CD8-positive, alpha-beta T cell (primary cell): ENCODE measurements at regions of chr7 and their contacts with region 1.

Region 1: GRCh38 chr7:26200444-26201246 is at the start of gene HNRNPA2B1:
- DNase-seq: peak; percentile 96 to 100 (median 98)
- ATAC-seq: peak; percentile 75
- H3K4me3 ChIP-seq: peak within 1 kb of the TSS; percentile 75 to 95
- H3K4me3 Mint-ChIP-seq: peak within 1 kb of the TSS; percentile 100
- H3K27ac ChIP-seq: peak within 1 kb of the TSS; percentile 92 to 95
- H3K27ac Mint-ChIP-seq: peak within 1 kb of the TSS; percentile 99
- H3K4me1 ChIP-seq: peaks cover 49% of the 10 kb centered on the region
- H3K4me1 Mint-ChIP-seq: peaks cover 51% of the 10 kb centered on the region
- H3K27me3 ChIP-seq: no peaks in the 10 kb centered on the region
- H3K27me3 Mint-ChIP-seq: no peaks in the 10 kb centered on the region
- CTCF ChIP-seq: no peak
- total RNA-seq, gene HNRNPA2B1: 241 to 247 TPM

Region 2: GRCh38 chr7:25894902-25895791 is 305.5 kb before region 1 on chr7:
- CTCF ChIA-PET with region 1: interaction called, 5 read pairs
- POLR2A ChIA-PET with region 1: interaction called, 6 read pairs
- intact Hi-C with region 1: loop called (anchors 5 to 10 kb)
- DNase-seq: peak; percentile 41 to 80 (median 63)
- ATAC-seq: peak; percentile 41
- H3K4me3 ChIP-seq: peak overlapping the region in 1 of 2 experiments; percentile 12
- H3K4me3 Mint-ChIP-seq: peak overlapping the region; percentile 35
- H3K27ac ChIP-seq: no peak overlapping the region
- H3K27ac Mint-ChIP-seq: no peak overlapping the region
- H3K4me1 ChIP-seq: peaks cover 14% of the 10 kb centered on the region
- H3K4me1 Mint-ChIP-seq: peaks cover 21% of the 10 kb centered on the region
- H3K27me3 ChIP-seq: no peaks in the 10 kb centered on the region
- H3K27me3 Mint-ChIP-seq: peaks cover under 1% of the 10 kb centered on the region
- CTCF ChIP-seq: peak; percentile 45

Region 3: GRCh38 chr7:26101361-26102151 is 99.1 kb before region 1 on chr7:
- CTCF ChIA-PET with region 1: interaction called, 5 read pairs
- POLR2A ChIA-PET with region 1: interaction called, 26 read pairs
- intact Hi-C with region 1: no loop called
- DNase-seq: peak in 1 of 9 experiments; percentile 27
- ATAC-seq: no peak
- H3K4me3 ChIP-seq: no peak overlapping the region
- H3K4me3 Mint-ChIP-seq: peak overlapping the region; percentile 71
- H3K27ac ChIP-seq: no peak overlapping the region
- H3K27ac Mint-ChIP-seq: peak overlapping the region; percentile 83
- H3K4me1 ChIP-seq: peaks cover 40% of the 10 kb centered on the region
- H3K4me1 Mint-ChIP-seq: peaks cover 52% of the 10 kb centered on the region
- H3K27me3 ChIP-seq: no peaks in the 10 kb centered on the region
- H3K27me3 Mint-ChIP-seq: no peaks in the 10 kb centered on the region
- CTCF ChIP-seq: no peak

Region 4: DNA sequence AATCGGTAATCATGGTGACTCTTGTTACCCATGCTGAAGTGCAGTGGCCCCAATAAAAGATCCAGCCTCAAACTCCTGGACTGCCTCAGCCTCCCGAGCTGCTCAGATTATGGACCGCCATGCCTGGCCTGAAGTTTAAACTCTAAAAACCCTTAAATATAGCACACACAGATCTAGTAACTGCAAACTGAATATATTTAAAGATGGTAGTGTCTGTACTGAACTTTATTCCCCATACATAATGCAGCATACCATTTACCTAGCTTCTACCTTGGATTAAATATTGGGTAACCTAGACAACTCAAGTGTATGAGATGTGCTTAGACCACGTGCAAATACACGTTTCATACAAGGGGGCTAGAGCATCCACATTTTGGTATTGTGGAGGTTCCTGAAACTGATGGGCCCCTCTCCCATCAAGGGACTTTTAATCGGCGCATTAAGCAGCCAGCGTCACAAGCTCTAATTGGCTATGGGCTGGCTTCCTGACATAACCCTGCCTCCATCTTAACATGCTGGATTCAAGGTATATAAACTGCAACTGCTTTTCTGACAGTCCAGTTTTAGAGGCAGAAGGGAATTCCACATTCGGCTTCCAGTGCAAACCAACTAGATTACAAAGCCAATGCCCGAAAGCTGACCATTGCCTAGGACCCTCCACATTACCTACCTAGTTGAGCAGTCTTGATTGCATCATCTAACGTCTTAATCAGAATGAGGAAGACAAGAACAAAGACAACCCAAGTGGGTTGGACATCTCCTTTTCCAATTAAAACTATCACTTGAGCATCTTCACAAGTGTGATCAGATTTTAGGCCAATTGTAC is 13.1 kb before region 1 on chr7:
- CTCF ChIA-PET with region 1: interaction called, 31 read pairs
- POLR2A ChIA-PET with region 1: interaction called, 241 read pairs
- intact Hi-C with region 1: loop called in 1 of 2 experiments (anchors 2 kb)
- DNase-seq: peak in 1 of 9 experiments; percentile 38
- ATAC-seq: peak; percentile 9
- H3K4me3 ChIP-seq: no peak overlapping the region
- H3K4me3 Mint-ChIP-seq: no peak overlapping the region
- H3K27ac ChIP-seq: peak overlapping the region in 1 of 2 experiments; percentile 14
- H3K27ac Mint-ChIP-seq: peak overlapping the region; percentile 76
- H3K4me1 ChIP-seq: peaks cover 43% of the 10 kb centered on the region
- H3K4me1 Mint-ChIP-seq: peaks cover 79% of the 10 kb centered on the region
- H3K27me3 ChIP-seq: no peaks in the 10 kb centered on the region
- H3K27me3 Mint-ChIP-seq: no peaks in the 10 kb centered on the region
- CTCF ChIP-seq: no peak

Region 5: GRCh38 chr7:26538689-26539088 is 338.0 kb after region 1 on chr7:
- CTCF ChIA-PET with region 1: no interaction called
- POLR2A ChIA-PET with region 1: no interaction called
- intact Hi-C with region 1: no loop called
- DNase-seq: no peak
- ATAC-seq: no peak
- H3K4me3 ChIP-seq: no peak overlapping the region
- H3K4me3 Mint-ChIP-seq: no peak overlapping the region
- H3K27ac ChIP-seq: no peak overlapping the region
- H3K27ac Mint-ChIP-seq: no peak overlapping the region
- H3K4me1 ChIP-seq: no peaks in the 10 kb centered on the region
- H3K4me1 Mint-ChIP-seq: no peaks in the 10 kb centered on the region
- H3K27me3 ChIP-seq: no peaks in the 10 kb centered on the region
- H3K27me3 Mint-ChIP-seq: peaks cover 40% of the 10 kb centered on the region
- CTCF ChIP-seq: no peak

Region 6: DNA sequence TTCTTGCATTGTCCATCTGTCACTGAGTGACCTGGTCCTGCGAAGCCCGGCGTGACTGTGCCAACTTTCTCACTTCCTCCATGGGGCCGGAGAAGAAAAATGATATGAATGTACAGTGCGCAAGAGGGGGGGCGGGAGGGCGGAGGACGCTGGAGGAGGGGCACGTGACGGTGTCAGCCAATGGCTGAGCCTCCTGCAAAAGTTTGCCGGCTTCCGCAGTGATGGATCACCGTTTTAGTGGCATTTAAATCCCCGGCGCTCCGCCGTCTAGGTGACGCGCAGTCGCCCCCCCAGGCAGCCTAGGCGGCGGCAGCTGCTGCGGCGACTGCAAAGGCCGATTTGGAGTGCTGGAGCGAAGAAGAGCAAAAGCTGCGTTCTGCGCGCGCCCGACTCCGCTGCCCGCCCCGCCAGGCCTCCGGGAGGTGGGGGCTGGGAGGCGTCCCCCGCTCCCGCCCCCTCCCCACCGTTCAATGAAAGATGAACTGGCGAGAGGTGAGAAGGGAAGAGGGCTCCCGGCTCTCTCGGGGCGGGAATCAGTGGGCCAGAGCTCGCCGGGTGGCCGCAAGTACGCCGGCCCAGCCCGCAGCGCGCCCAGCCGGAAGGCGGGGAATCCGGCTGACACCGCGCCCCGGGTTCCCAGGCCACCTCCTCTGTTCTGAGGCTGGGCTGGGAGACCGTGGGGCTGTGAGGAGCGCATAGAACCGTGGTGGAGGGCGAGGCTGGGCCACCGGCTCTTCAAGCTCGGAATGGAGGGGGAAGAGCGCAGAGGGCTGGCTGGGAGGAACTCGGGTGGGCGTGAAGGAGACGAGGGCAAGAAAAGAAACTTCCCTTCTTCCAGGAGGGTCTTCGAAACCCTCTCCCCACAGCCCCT is 895.5 kb after region 1 on chr7 and contains the start of gene HOXA1:
- CTCF ChIA-PET with region 1: no interaction called
- POLR2A ChIA-PET with region 1: no interaction called
- intact Hi-C with region 1: loop called in 1 of 2 experiments (anchors 5 kb)
- DNase-seq: peak; percentile 44 to 90 (median 74)
- ATAC-seq: peak; percentile 91
- H3K4me3 ChIP-seq: peak within 1 kb of the TSS; percentile 76 to 80
- H3K4me3 Mint-ChIP-seq: peak within 1 kb of the TSS; percentile 90
- H3K27ac ChIP-seq: peak within 1 kb of the TSS; percentile 42 to 46
- H3K27ac Mint-ChIP-seq: peak within 1 kb of the TSS; percentile 82
- H3K4me1 ChIP-seq: peaks cover 21% of the 10 kb centered on the region
- H3K4me1 Mint-ChIP-seq: peaks cover 35% of the 10 kb centered on the region
- H3K27me3 ChIP-seq: peaks cover 0 to 15% of the 10 kb centered on the region in 2 experiments
- H3K27me3 Mint-ChIP-seq: peaks cover 42% of the 10 kb centered on the region
- CTCF ChIP-seq: no peak
- total RNA-seq, gene HOXA1: 0.79 to 0.83 TPM

Region 7: DNA sequence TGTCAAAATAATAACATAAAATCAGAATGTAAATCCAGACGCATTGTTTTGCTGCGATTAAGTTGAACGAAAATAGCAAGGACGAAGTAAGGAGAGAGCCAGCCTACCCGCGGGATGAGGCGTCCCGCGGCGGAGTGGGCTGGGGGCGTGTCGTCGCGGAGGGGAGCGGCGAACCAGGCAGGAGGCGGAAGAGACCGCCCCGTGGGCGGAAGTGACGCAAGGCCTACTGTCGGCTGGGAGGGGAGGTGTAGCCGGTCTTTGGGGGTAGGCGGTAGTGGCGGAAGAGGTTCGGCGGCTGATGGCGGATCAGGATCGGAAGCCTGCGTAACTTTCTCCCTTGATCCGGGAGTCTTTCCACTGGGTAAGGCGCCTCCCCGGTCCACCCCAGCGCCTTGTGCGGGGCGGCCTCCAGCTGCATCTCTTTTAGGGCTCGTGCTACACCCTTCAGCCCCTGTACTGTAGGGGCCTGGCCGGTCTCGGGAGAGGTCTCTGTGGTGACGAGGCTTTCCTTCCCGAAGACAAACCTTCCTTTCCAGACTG is 1539.3 kb after region 1 on chr7 and contains the start of gene TAX1BP1:
- CTCF ChIA-PET with region 1: no interaction called
- POLR2A ChIA-PET with region 1: interaction called, 3 read pairs
- intact Hi-C with region 1: loop called in 1 of 2 experiments (anchors 5 kb)
- DNase-seq: peak; percentile 88 to 98 (median 96)
- ATAC-seq: peak; percentile 91
- H3K4me3 ChIP-seq: peak within 1 kb of the TSS; percentile 97 to 100
- H3K4me3 Mint-ChIP-seq: peak within 1 kb of the TSS; percentile 99
- H3K27ac ChIP-seq: peak within 1 kb of the TSS; percentile 97 to 99
- H3K27ac Mint-ChIP-seq: peak within 1 kb of the TSS; percentile 99
- H3K4me1 ChIP-seq: peaks cover 27% of the 10 kb centered on the region
- H3K4me1 Mint-ChIP-seq: peaks cover 40% of the 10 kb centered on the region
- H3K27me3 ChIP-seq: no peaks in the 10 kb centered on the region
- H3K27me3 Mint-ChIP-seq: no peaks in the 10 kb centered on the region
- CTCF ChIP-seq: no peak
- total RNA-seq, gene TAX1BP1: 132 to 139 TPM